ENCODE measurements at regions of chr12 and their contacts with region 1.

Region 1: DNA sequence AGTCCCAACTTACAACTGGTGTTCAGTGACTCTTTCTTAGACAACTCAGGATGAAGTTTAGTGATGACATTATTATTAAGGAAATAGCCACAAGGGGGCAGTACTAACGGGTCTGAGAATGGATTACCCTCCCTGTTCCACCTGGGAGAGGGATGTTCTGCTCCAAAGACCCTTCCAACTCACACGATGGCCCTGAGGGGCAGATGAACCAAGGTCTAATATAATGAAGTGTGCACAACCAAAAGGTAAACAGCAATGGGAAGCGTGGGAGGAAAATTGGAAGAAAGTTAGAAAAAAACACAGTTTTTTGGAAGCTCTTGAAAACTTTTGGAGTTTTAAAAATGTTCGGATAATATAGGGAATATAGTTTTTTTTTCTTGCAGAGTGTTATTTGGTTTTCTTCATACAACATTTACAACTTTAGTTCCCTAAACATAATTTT is 24.0 kb downstream of the FGF6 start:
- DNase-seq: no peak
- H3K4me3 ChIP-seq: no peak overlapping the region
- H3K27ac ChIP-seq: no peak overlapping the region
- H3K4me1 ChIP-seq: peaks cover 0 to 3% (median under 1%) of the 10 kb centered on the region in 4 experiments; a peak in 2 of 7 replicates
- H3K27me3 ChIP-seq: no peaks in the 10 kb centered on the region
- CTCF ChIP-seq: peak; percentile 11 to 63 (median 57)
- EP300 ChIP-seq: no peak
- POLR2A ChIP-seq: no peak
- RAD21 ChIP-seq: peak; percentile 74 to 84

Region 2: GRCh38 chr12:4379405-4379804 is 42.2 kb before region 1 on chr12 and contains the start of gene FGF23:
- CTCF ChIA-PET with region 1: interaction called, 35 read pairs
- POLR2A ChIA-PET with region 1: interaction called, 3 read pairs
- DNase-seq: peak; percentile 19 to 75
- H3K4me3 ChIP-seq: peak within 1 kb of the TSS in 1 of 4 experiments; percentile 30; a peak in 1 of 8 replicates
- H3K27ac ChIP-seq: no peak within 1 kb of the TSS
- H3K4me1 ChIP-seq: peaks cover 0 to 6% (median 4%) of the 10 kb centered on the region in 4 experiments; a peak in 4 of 7 replicates
- H3K27me3 ChIP-seq: 0 out of 7 replicates have a peak, but pooled peaks cover 0 to 1% (median 0%) of the 10 kb centered on the region in 4 experiments
- CTCF ChIP-seq: no peak
- EP300 ChIP-seq: no peak
- POLR2A ChIP-seq: no peak
- RAD21 ChIP-seq: no peak
- total RNA-seq, gene FGF23: 0.42 and 0.67 TPM in 2 replicates

Region 3: DNA sequence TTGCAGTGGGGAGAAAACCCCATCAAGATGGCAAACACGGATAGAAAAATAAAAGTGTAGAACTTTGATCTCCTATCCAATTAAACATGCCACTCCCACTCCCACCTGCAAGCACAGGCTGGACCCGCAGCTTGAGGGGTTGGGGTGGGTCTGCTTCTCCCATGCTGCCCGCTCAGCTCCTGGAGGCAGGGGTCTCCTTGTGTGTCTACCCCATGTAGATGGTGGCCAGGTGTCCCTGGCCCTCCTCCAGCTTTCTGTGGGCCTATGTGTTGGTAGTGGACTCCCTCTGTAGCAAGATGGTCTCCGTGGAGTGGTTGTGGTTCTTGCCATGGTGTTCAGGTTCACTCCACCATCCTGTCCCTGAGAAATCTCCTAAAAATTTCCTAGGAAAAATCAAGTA is 18.6 kb before region 1 on chr12:
- CTCF ChIA-PET with region 1: interaction called, 10 read pairs
- POLR2A ChIA-PET with region 1: interaction called, 3 read pairs
- DNase-seq: no peak
- H3K4me3 ChIP-seq: no peak overlapping the region
- H3K27ac ChIP-seq: no peak overlapping the region
- H3K4me1 ChIP-seq: no peaks in the 10 kb centered on the region
- H3K27me3 ChIP-seq: no peaks in the 10 kb centered on the region
- CTCF ChIP-seq: no peak
- EP300 ChIP-seq: no peak
- POLR2A ChIP-seq: no peak
- RAD21 ChIP-seq: no peak

Region 4: GRCh38 chr12:4434706-4435425 is 13.3 kb after region 1 on chr12:
- CTCF ChIA-PET with region 1: interaction called, 29 read pairs
- POLR2A ChIA-PET with region 1: interaction called, 3 read pairs
- DNase-seq: peak in 1 of 2 experiments; percentile 26
- H3K4me3 ChIP-seq: no peak overlapping the region
- H3K27ac ChIP-seq: no peak overlapping the region
- H3K4me1 ChIP-seq: peaks cover 0 to 8% (median 0%) of the 10 kb centered on the region in 4 experiments; a peak in 1 of 7 replicates
- H3K27me3 ChIP-seq: no peaks in the 10 kb centered on the region; a peak in 1 of 7 replicates
- CTCF ChIP-seq: no peak
- EP300 ChIP-seq: no peak
- POLR2A ChIP-seq: no peak
- RAD21 ChIP-seq: no peak

Region 5: DNA sequence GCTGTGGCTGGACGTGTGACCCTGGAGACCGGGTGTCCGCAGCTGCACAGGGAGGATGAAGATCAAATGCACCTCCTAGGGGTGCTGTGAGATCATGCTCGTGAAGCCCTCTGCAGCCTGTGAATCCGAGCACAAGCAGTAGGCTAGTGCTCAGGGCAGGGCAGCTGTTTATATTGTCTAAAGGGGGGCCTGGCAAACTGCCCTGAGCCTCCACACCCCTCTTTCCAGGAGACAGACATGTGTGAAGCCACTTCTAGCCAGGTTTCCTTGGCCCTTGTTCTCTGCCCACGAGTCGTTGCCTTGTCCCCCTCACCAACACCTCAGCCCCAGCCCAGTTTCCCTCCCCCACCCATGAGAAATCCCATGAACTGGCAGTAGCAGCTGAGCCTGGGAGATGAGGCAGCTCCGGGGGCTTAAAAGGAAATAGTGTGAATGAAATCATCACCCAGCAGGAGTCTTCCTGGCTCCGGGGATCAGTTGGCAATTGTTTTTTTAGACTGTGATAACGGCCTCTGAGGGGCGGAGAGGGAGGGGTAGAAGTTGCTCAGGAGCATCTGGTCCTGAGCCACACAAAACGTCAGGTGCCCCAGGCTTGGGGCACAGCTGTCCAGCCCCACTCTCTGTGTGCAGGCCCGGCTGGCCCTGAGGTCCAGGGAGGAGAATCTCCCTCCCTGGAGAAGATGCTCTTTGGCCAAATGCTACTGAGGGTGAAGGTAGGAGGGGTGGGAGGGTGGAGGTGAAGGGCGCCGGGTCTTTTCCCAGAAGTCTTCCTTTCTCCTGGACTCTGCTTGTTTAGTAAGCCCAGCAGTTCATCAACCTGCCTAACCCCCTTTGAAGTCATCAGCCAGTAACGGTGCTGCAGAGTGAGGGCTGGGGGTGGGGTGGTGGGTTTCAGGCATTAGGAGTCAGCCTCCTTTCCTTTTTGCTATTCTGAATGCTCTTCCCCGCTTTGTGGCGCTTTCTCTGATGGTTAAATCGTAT is 20.0 kb after region 1 on chr12:
- CTCF ChIA-PET with region 1: interaction called, 24 read pairs
- POLR2A ChIA-PET with region 1: no interaction called
- DNase-seq: peak; percentile 41 to 55
- H3K4me3 ChIP-seq: peak overlapping the region in 2 of 4 experiments; percentile 12 to 30; a peak in 3 of 8 replicates
- H3K27ac ChIP-seq: no peak overlapping the region; the same call in 1 of the 2 replicates
- H3K4me1 ChIP-seq: peaks cover 12 to 24% (median 19%) of the 10 kb centered on the region in 4 experiments
- H3K27me3 ChIP-seq: no peaks in the 10 kb centered on the region
- CTCF ChIP-seq: no peak
- EP300 ChIP-seq: no peak
- POLR2A ChIP-seq: no peak
- RAD21 ChIP-seq: no peak

Region 6: GRCh38 chr12:4526923-4527546 is 105.4 kb after region 1 on chr12:
- CTCF ChIA-PET with region 1: interaction called, 39 read pairs
- POLR2A ChIA-PET with region 1: no interaction called
- DNase-seq: no peak
- H3K4me3 ChIP-seq: no peak overlapping the region
- H3K27ac ChIP-seq: no peak overlapping the region
- H3K4me1 ChIP-seq: no peaks in the 10 kb centered on the region
- H3K27me3 ChIP-seq: no peaks in the 10 kb centered on the region
- CTCF ChIP-seq: peak in 2 of 3 experiments; percentile 1 to 9; a peak in 2 of 4 replicates
- EP300 ChIP-seq: no peak
- POLR2A ChIP-seq: no peak
- RAD21 ChIP-seq: peak; percentile 23 to 44

Region 7: DNA sequence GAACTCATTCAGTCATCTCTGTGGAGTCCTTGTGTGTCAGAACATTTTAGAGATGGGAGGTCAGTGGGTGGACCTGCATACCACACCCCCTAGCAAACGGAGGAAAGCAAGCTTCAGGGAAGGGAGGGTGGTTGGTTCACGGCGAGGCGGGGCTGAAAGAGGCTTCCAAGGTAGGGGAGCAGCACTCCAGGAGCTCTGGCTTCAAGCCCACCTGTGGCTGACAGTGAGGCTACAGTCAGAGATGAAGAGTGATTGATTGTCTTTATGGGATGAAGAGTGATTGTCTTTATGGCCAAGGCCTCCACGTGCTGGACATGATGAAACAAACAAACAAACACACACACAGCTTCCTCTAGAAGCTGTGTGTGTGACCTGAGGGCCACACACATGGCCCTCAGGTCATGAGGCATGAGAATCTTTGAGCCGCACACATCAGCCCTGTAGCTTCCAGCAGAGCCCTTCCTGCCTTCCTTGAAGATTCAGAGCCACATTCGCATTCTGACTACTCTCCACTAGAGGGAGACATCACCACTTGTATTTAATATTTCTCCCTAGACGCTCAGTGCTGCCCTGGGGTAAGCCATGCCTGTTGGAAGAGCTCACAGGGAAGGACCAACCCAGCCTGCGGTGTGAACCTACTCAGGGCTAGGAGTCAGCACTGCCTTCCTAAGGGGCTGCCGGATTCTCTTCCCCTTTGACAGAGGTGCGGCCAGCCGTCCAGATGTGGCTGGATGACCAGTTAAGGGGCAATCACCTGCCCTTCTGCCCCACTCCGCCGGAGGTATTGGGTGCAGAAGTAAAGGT is 433.7 kb after region 1 on chr12:
- CTCF ChIA-PET with region 1: no interaction called
- POLR2A ChIA-PET with region 1: no interaction called
- DNase-seq: peak; percentile 64 to 67
- H3K4me3 ChIP-seq: no peak overlapping the region
- H3K27ac ChIP-seq: no peak overlapping the region
- H3K4me1 ChIP-seq: peaks cover 2 to 14% (median 6%) of the 10 kb centered on the region in 4 experiments; a peak in 6 of 7 replicates
- H3K27me3 ChIP-seq: peaks cover 0 to 13% (median 6%) of the 10 kb centered on the region in 4 experiments; a peak in 4 of 7 replicates
- CTCF ChIP-seq: peak; percentile 24 to 84 (median 83)
- EP300 ChIP-seq: no peak
- POLR2A ChIP-seq: no peak
- RAD21 ChIP-seq: peak; percentile 89 to 90